ENCODE measurements at regions of chr18 and their contacts with region 1.

Region 1: GRCh38 chr18:9708057-9708433 is at the start of gene RAB31:
- DNase-seq: peak; percentile 48
- H3K4me3 ChIP-seq: peak within 1 kb of the TSS; percentile 68
- H3K27ac ChIP-seq: peak within 1 kb of the TSS; percentile 48
- H3K4me1 ChIP-seq: peaks cover 12% of the 10 kb centered on the region
- H3K27me3 ChIP-seq: no peaks in the 10 kb centered on the region
- CTCF ChIP-seq: no peak
- total RNA-seq, gene RAB31: 6.1 and 8.1 TPM in 2 replicates

Region 2: GRCh38 chr18:9665314-9665713 is 42.7 kb before region 1 on chr18:
- CTCF ChIA-PET with region 1: no interaction called
- POLR2A ChIA-PET with region 1: no interaction called
- intact Hi-C with region 1: no loop called
- DNase-seq: no peak
- H3K4me3 ChIP-seq: no peak overlapping the region
- H3K27ac ChIP-seq: no peak overlapping the region
- H3K4me1 ChIP-seq: no peaks in the 10 kb centered on the region
- H3K27me3 ChIP-seq: no peaks in the 10 kb centered on the region
- CTCF ChIP-seq: no peak

Region 3: GRCh38 chr18:9925369-9925768 is 217.3 kb after region 1 on chr18:
- CTCF ChIA-PET with region 1: no interaction called
- POLR2A ChIA-PET with region 1: no interaction called
- intact Hi-C with region 1: loop called (anchors 10 kb)
- DNase-seq: no peak
- H3K4me3 ChIP-seq: no peak overlapping the region
- H3K27ac ChIP-seq: no peak overlapping the region
- H3K4me1 ChIP-seq: peaks cover 72% of the 10 kb centered on the region
- H3K27me3 ChIP-seq: no peaks in the 10 kb centered on the region
- CTCF ChIP-seq: no peak

Region 4: DNA sequence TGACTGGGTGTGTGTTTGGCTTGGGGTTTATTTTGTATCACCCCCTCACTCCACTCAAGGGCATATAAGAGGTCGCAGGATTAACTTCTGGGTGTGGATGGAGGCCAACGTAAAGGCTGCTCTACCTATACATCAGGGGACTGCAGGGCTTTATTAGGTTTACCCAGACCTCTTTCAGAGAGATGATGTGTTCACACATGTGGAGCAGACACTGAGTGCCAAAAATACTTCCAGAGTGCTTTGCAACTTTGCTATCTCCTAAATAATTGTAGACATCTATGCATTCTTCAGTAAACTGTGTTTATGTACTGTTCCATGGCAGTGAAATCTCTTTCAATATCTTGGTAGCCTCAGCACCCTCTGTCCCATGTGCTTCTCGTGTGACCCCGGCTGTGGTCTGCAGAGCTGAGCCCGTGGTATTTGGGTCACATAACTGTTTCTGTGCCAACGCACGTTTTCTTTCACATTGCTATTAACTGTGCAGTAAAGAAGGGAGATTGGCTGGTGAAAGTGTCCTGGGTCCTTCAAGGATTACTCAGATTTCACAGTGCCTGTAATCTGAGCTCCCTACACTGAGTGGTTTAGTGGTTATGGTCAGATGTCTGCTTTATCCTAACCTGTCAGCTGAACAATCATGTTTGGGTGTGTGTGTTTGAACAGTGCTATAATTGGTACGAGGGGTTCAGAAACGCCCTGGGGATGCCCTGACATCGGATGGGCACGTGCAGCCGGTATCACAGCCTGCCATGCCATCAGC is 413.9 kb after region 1 on chr18:
- CTCF ChIA-PET with region 1: no interaction called
- POLR2A ChIA-PET with region 1: no interaction called
- intact Hi-C with region 1: no loop called
- DNase-seq: peak; percentile 21
- H3K4me3 ChIP-seq: no peak overlapping the region
- H3K27ac ChIP-seq: no peak overlapping the region
- H3K4me1 ChIP-seq: peaks cover 34% of the 10 kb centered on the region
- H3K27me3 ChIP-seq: no peaks in the 10 kb centered on the region
- CTCF ChIP-seq: no peak